Common myeloid progenitor, CD34-positive (primary cell): ENCODE measurements at regions of chr1 and their contacts with region 1.

Region 1: DNA sequence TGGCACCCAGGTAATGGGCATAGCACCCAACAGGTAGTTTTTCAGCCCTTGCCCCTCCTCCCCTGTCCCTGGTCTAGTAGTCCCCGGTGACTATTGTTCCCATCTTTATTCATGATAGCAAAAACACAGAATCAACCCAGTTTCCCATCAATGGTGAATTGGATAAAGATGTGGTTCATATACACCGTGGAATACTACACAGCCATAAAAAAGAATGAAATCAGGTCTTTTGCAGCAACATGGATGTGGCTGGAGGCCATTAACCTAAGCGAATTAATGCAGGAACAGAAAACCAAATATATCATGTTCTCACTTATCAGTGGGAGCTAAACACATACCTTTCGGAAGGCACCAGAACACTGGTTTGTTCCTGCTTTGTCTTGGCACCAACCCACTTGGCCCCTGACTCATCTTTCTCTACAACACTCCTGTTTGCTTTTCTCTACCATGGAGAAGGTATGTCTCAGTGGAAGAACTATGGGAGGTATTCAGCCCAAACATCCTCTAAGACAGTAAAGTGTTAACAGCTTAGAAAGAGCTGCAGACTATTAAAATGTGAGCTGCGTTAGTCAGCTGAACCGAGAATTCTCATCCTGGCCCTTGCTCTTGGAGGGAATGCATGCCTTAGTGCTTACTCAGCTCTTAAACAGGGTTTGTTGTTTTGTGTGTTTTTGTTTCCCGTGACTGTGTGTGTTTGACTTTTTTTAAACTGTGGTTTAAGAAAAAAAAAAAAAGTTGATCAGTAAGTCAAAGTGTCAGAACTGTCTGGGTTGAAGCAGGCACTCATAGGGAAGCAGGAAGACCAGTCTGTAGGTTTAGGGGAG is 203.0 kb downstream of the TOMM20 start:
- DNase-seq: peak in 2 of 3 donors; percentile 68 to 80
- H3K4me3 ChIP-seq: peak overlapping the region in 1 of 7 experiments; percentile 3
- H3K27ac ChIP-seq: no peak overlapping the region
- H3K4me1 ChIP-seq: peaks cover 7 to 46% (median 43%) of the 10 kb centered on the region in 4 experiments
- H3K27me3 ChIP-seq: no peaks in the 10 kb centered on the region

Region 2: GRCh38 chr1:234912548-234913277 is 12.9 kb before region 1 on chr1:
- CTCF ChIA-PET with region 1: interaction called, 31 read pairs
- POLR2A ChIA-PET with region 1: no interaction called
- DNase-seq: no peak
- H3K4me3 ChIP-seq: no peak overlapping the region
- H3K27ac ChIP-seq: no peak overlapping the region
- H3K4me1 ChIP-seq: peaks cover 10 to 48% (median 36%) of the 10 kb centered on the region in 4 experiments
- H3K27me3 ChIP-seq: no peaks in the 10 kb centered on the region

Region 3: DNA sequence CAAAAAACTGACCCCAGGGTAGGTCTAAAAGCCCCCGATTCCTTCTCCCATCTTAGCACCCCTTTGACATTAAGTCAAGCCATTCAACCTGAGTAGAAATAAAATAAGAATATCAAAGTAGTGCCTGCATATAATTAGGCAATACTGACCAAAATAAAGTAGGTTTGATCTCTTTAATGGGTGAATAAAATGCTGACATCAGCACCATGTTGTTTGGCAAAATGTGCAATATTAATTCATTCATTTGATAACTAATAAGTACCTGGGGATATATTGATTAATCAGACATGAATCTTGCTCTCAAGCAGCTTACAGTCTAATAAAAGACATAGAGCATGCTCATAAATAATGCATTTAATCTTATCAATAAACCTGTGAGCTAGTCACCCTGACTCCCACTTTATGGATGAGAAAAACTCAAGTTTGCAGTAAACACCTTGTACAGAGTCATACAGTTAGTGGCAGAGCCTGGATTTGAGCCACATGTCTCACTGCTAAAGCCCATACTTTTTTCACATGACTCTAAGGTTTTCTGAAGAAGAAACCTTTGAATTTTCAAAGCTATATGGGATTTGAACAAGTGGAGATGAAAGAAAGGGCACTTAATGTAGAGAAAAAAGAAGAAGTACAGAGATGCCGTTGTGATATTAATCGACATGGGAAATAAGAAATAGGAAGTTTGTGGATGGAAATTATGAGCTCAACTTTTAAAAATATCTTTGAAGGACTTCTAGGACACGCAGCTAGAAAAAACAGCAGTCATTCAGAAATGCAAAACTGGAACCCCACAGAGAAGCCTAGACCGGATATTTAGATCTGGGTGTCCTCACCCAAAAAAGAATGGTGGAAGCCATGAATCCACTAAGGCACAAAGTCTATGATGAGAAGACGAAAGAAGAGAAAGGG is 19.0 kb after region 1 on chr1:
- CTCF ChIA-PET with region 1: interaction called, 11 read pairs
- POLR2A ChIA-PET with region 1: interaction called, 4 read pairs
- DNase-seq: peak in 2 of 3 donors; percentile 63 to 72
- H3K4me3 ChIP-seq: peak overlapping the region in 1 of 7 experiments; percentile 16
- H3K27ac ChIP-seq: peak overlapping the region; percentile 33 to 74
- H3K4me1 ChIP-seq: peaks cover 16 to 32% (median 20%) of the 10 kb centered on the region in 4 experiments
- H3K27me3 ChIP-seq: no peaks in the 10 kb centered on the region